Naive thymus-derived CD8-positive, alpha-beta T cell (primary cell): ENCODE measurements at regions of chr11 and their contacts with region 1.

Region 1: DNA sequence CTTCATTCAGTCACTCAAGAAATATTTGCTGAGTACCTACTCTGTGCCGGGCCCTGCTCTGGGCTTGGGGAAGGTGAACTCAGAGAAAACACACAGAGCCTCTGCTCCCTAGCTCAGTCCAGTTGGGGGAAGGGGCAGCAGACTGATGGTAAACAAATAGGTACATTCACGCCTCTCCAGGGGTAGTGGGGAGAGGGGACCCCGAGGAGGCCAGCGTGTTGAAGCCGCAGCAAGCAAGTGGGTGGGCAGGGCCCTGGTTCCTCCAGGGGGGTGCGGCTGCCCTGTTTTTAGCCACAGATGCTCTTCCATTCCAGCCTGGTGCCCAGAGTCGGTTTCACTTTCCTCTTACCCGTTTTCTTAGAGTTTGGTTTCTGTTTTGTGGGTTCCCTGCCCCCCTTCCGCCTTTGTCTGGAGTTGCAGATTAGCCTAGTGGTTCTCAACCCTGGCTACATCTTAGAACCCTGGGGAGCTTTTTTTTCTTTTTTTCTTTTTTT is 8.7 kb downstream of the DRAP1 start:
- DNase-seq: peak; percentile 49 to 90 (median 77)
- ATAC-seq: peak; percentile 92 to 96
- H3K4me3 Mint-ChIP-seq: peak overlapping the region; percentile 65 to 86 (median 74)
- H3K27ac Mint-ChIP-seq: peak overlapping the region; percentile 88 to 99 (median 97)
- H3K4me1 Mint-ChIP-seq: peaks cover 23 to 61% (median 48%) of the 10 kb centered on the region in 4 donors
- H3K27me3 Mint-ChIP-seq: no peaks in the 10 kb centered on the region

Region 2: DNA sequence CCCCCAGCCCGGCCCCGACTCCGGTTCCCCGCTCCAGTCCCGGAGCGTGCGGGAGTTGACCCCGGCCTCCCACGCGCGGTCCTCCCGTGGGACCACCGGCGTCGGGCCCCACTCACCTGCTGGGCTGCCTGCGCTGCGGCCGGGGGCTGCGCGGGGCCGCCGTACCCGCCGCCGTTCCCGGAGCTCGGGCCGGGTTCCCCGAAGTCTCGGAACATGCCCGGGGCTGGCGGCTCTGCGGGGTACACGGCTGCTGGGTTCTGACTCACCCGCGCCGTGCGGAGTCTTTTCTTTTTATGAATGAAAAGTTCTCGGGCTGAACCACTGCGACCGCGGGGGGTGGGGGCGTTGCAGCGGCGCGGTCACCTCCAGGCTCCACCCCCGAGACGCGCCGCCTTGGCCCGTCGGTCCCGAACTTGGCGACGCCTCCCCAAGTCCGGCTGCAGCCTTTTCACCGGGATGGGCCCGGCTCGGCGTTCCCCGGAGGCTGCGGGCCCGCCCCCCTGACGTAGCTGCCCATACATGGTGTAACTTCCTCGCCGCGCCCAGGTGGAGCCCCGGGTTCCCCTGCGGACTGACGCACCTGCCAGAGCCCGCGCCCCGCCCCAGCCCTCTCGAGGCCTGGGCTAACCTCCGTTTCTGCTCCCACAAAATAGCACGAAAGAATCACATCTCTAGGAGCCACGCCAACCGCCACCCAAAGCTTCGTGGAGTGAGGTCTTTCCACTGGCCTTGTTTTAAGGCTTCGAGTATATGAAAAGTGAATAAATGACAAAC is 27.6 kb before region 1 on chr11 and contains the start of gene FOSL1:
- POLR2A ChIA-PET with region 1: interaction called, 183 read pairs
- DNase-seq: peak; percentile 85 to 95 (median 91)
- ATAC-seq: peak; percentile 93 to 98
- H3K4me3 Mint-ChIP-seq: peak within 1 kb of the TSS; percentile 57 to 80 (median 74)
- H3K27ac Mint-ChIP-seq: peak within 1 kb of the TSS in 9 of 10 donors; percentile 41 to 94 (median 72)
- H3K4me1 Mint-ChIP-seq: peaks cover 2 to 24% (median 10%) of the 10 kb centered on the region in 4 donors
- H3K27me3 Mint-ChIP-seq: peaks cover 0 to 4% (median 0%) of the 10 kb centered on the region in 5 donors
- polyA plus RNA-seq, gene FOSL1: 0.17 to 0.22 TPM in 2 of 3 donors, not detected in the other

Region 3: GRCh38 chr11:65961232-65961901 is 33.4 kb after region 1 on chr11 and contains the start of gene SART1:
- POLR2A ChIA-PET with region 1: interaction called, 15 read pairs
- DNase-seq: peak; percentile 91 to 99 (median 96)
- ATAC-seq: peak; percentile 91 to 93
- H3K4me3 Mint-ChIP-seq: peak within 1 kb of the TSS; percentile 93 to 99 (median 98)
- H3K27ac Mint-ChIP-seq: peak within 1 kb of the TSS; percentile 97 to 100 (median 98)
- H3K4me1 Mint-ChIP-seq: peaks cover 23 to 53% (median 51%) of the 10 kb centered on the region in 4 donors
- H3K27me3 Mint-ChIP-seq: no peaks in the 10 kb centered on the region
- polyA plus RNA-seq, gene SART1: 16.2 to 57.3 (median 30.4) TPM

Region 4: GRCh38 chr11:65973439-65974110 is 45.6 kb after region 1 on chr11:
- POLR2A ChIA-PET with region 1: no interaction called
- DNase-seq: no peak
- ATAC-seq: no peak
- H3K4me3 Mint-ChIP-seq: no peak overlapping the region
- H3K27ac Mint-ChIP-seq: no peak overlapping the region
- H3K4me1 Mint-ChIP-seq: peaks cover 10 to 20% (median 16%) of the 10 kb centered on the region in 4 donors
- H3K27me3 Mint-ChIP-seq: no peaks in the 10 kb centered on the region